SK-N-SH (cell line): ENCODE measurements at regions of chr9 and their contacts with region 1.

Region 1: DNA sequence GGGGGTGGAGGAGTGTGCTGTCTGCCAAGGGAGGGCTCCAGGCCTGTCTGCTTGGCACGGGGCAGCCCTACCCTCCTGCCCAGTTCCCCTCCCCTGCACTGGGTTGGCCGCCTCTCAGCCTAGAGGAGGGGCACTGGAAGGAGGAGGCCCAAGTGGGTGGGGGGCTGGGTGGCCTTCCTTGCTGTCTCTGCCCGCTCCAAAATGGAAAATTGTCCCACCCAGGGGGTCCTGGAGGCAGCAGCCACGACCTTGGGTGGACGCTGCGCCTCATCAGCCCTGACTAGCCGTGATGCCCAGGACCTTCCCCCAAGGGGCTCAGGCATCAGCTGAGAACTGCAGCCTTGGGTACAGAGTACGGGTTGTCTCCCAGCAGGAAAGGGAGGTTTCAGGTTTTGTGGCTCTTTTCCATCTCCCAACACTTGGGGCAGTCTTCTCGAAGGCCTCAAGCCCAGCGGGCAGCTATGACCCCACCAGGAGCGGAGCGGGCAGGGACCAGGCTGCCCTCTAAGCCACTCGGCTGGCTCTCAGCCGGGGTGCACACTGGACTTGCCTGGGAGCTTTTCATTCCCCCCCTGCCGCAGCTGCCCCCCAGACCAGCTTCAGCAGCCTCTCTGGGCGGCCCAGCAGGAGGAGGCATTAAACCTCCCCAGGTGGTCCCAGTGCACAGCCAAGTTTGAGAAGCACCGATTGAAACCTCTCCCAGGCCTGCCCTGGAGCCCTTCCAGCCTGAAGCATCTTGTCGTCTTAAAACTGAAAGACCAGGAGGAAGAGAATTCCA is 20.6 kb downstream of the NTNG2 start:
- DNase-seq: peak; percentile 84
- H3K4me3 ChIP-seq: no peak overlapping the region; a peak in 1 of 4 replicates
- H3K27ac ChIP-seq: peak overlapping the region; percentile 30 to 99; a peak in 3 of 4 replicates
- H3K4me1 ChIP-seq: peaks cover 0 to 66% of the 10 kb centered on the region in 2 experiments; a peak in 2 of 4 replicates
- H3K27me3 ChIP-seq: no peaks in the 10 kb centered on the region
- CTCF ChIP-seq: peak; percentile 34
- EP300 ChIP-seq: no peak
- RAD21 ChIP-seq: no peak; the same call in 1 of the 2 replicates

Region 2: DNA sequence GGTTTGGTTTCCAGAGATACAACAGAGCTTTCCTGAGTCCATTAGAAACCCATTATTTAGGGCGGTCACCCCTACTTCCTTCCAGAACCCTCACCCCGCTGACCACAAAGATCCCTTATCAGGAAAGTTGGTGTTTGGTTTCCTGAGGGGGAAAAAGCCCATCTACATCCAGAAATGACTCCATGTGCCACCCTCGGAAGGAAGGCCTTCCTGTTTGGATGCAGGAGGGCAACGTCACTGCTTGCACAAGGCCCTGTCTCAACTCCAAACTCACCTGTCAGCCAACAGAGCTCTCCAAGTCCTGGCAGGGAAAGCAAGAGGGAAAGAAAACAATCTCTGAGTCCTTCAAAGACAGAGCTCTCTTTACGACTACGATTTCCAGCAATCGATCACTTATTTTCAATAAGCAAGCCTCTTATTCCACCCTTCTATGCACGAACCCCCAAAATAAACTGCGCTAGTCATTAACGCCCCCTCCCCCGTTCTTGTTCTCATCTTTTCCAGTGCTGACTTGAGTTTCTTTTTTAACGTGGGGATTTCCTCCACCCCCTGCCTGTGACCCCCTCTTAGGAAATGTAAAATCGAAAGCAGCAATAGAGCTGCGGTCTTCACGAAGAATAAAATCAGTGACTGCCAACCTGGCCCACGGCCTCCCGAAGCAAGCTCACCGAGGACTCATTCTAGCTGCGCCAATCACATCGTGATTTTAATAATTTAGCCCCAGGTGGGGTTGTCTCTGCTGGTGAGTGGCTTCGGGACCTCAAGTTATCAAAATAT is 56.4 kb before region 1 on chr9:
- CTCF ChIA-PET with region 1: no interaction called
- POLR2A ChIA-PET with region 1: no interaction called
- DNase-seq: no peak
- H3K4me3 ChIP-seq: no peak overlapping the region
- H3K27ac ChIP-seq: no peak overlapping the region
- H3K4me1 ChIP-seq: no peaks in the 10 kb centered on the region; a peak in 1 of 4 replicates
- H3K27me3 ChIP-seq: peaks cover 23% of the 10 kb centered on the region
- CTCF ChIP-seq: no peak
- EP300 ChIP-seq: no peak
- RAD21 ChIP-seq: no peak

Region 3: DNA sequence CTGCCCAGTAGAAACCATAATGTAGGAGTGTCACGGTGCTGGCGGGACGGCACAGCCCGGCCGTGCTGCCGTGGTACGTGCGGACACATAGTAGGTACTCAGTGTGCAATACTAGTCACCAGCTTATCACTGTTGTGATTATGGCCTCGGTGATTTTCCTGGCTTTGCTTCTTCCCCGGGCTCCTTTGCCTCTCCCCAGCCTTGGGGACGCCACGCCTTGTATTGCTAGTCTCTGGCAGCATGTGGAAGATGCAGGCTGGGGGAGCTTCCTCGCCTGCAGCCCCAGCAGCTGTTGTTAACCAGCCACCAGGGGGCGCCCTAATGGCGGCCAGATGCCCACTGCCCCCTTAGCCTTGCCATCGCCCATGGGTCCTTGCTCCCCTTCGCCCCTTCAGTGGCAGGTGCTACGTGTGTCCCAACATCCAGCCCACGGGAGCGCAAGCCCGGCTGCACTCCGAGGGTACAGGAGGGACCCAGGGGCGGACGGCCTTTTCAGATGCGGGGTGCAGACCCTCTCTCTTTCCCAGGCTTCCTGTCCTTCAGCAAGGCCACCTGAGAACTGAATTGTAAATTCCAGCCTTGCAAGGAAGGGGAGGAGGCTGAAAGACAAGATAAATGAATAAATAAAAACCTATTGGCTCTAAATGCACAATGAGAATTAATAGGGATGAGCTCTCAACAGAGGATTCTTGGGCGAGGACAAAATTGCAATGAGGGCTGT is 12.7 kb before region 1 on chr9:
- CTCF ChIA-PET with region 1: interaction called, 93 read pairs
- POLR2A ChIA-PET with region 1: no interaction called
- DNase-seq: peak; percentile 80
- H3K4me3 ChIP-seq: peak overlapping the region in 1 of 2 experiments; percentile 38; a peak in 1 of 4 replicates
- H3K27ac ChIP-seq: no peak overlapping the region
- H3K4me1 ChIP-seq: peaks cover 0 to 31% of the 10 kb centered on the region in 2 experiments; a peak in 1 of 4 replicates
- H3K27me3 ChIP-seq: no peaks in the 10 kb centered on the region
- CTCF ChIP-seq: peak; percentile 76
- EP300 ChIP-seq: no peak
- RAD21 ChIP-seq: peak; percentile 69

Region 4: DNA sequence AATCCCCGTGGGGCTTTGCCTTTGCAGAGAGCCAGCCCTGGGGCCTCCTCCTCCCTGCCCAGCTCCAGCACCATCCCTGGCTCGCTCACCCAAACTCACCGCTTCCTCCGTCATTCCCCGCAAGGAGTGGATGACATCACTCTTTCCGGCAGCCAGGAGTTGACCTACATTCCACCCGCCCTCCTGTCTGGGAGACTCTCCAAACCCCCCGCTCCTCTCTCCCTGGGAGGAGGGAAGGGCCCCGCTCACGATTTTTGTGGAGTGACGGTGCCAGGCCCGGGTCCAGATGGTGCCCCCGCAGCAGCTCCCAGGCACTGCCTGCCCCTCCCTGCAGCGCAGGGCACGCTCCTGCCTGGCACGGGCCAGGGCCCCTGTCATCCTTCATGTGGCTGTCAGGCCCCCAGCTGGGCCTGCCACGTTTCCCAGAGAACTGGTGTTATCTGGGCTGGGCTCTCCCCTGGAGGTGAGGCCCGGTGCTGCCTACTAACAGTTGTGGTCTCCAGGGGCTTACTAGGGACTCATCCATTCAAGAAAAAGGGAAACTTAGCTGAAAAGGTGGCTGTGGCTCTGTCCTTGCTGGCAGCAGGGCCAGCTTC is 31.6 kb after region 1 on chr9:
- CTCF ChIA-PET with region 1: interaction called, 14 read pairs
- POLR2A ChIA-PET with region 1: interaction called, 4 read pairs
- DNase-seq: peak; percentile 90
- H3K4me3 ChIP-seq: peak overlapping the region; percentile 11 to 19; a peak in 1 of 4 replicates
- H3K27ac ChIP-seq: peak overlapping the region; percentile 64 to 71; a peak in 3 of 4 replicates
- H3K4me1 ChIP-seq: peaks cover 6 to 27% of the 10 kb centered on the region in 2 experiments; a peak in 1 of 4 replicates
- H3K27me3 ChIP-seq: no peaks in the 10 kb centered on the region
- CTCF ChIP-seq: no peak
- EP300 ChIP-seq: peak; percentile 27 to 68; a peak in 2 of 4 replicates
- RAD21 ChIP-seq: peak; percentile 34

Region 5: GRCh38 chr9:132268725-132269352 is 86.3 kb after region 1 on chr9:
- CTCF ChIA-PET with region 1: no interaction called
- POLR2A ChIA-PET with region 1: no interaction called
- DNase-seq: peak; percentile 70
- H3K4me3 ChIP-seq: no peak overlapping the region; a peak in 1 of 4 replicates
- H3K27ac ChIP-seq: peak overlapping the region; percentile 18 to 55; a peak in 2 of 4 replicates
- H3K4me1 ChIP-seq: peaks cover 0 to 3% of the 10 kb centered on the region in 2 experiments; a peak in 1 of 4 replicates
- H3K27me3 ChIP-seq: no peaks in the 10 kb centered on the region
- CTCF ChIP-seq: peak; percentile 97
- EP300 ChIP-seq: no peak
- RAD21 ChIP-seq: peak; percentile 78

Region 6: GRCh38 chr9:132319421-132320110 is 137.1 kb after region 1 on chr9:
- CTCF ChIA-PET with region 1: no interaction called
- POLR2A ChIA-PET with region 1: no interaction called
- DNase-seq: no peak
- H3K4me3 ChIP-seq: no peak overlapping the region
- H3K27ac ChIP-seq: no peak overlapping the region
- H3K4me1 ChIP-seq: peaks cover 8 to 9% of the 10 kb centered on the region in 2 experiments; a peak in 3 of 4 replicates
- H3K27me3 ChIP-seq: no peaks in the 10 kb centered on the region
- CTCF ChIP-seq: no peak
- EP300 ChIP-seq: no peak
- RAD21 ChIP-seq: no peak